ENCODE measurements at regions of chr20 and their contacts with region 1.

Region 1: GRCh38 chr20:23420943-23421931 is at the start of gene NAPB:
- DNase-seq: peak; percentile 68
- ATAC-seq: peak; percentile 99
- H3K4me3 ChIP-seq: peak within 1 kb of the TSS; percentile 91
- H3K27ac ChIP-seq: peak within 1 kb of the TSS; percentile 86
- H3K4me1 ChIP-seq: peaks cover 11% of the 10 kb centered on the region
- H3K27me3 ChIP-seq: no peaks in the 10 kb centered on the region
- CTCF ChIP-seq: peak in 2 of 3 experiments; percentile 10 to 37; a peak in 1 of 6 replicates
- EP300 ChIP-seq: peak in 1 of 2 experiments; percentile 29; a peak in 1 of 4 replicates
- POLR2A ChIP-seq: peak; percentile 94
- RAD21 ChIP-seq: no peak
- polyA plus RNA-seq, gene NAPB: 2.1 to 2.3 TPM

Region 2: GRCh38 chr20:23350196-23350903 is 70.9 kb before region 1 on chr20 and contains the start of gene NXT1:
- CTCF ChIA-PET with region 1: interaction called, 56 read pairs
- POLR2A ChIA-PET with region 1: interaction called, 36 read pairs
- RAD21 ChIA-PET with region 1: interaction called, 15 read pairs
- SMC1A ChIA-PET with region 1: interaction called, 7 read pairs
- in situ Hi-C with region 1: no loop called
- intact Hi-C with region 1: no loop called
- DNase-seq: peak; percentile 92
- ATAC-seq: peak; percentile 92
- H3K4me3 ChIP-seq: peak within 1 kb of the TSS; percentile 89
- H3K27ac ChIP-seq: peak within 1 kb of the TSS; percentile 95
- H3K4me1 ChIP-seq: peaks cover 4% of the 10 kb centered on the region
- H3K27me3 ChIP-seq: no peaks in the 10 kb centered on the region
- CTCF ChIP-seq: peak in 2 of 3 experiments; percentile 16 to 18; a peak in 1 of 6 replicates
- EP300 ChIP-seq: peak in 1 of 2 experiments; percentile 12; a peak in 2 of 4 replicates
- POLR2A ChIP-seq: peak; percentile 83
- RAD21 ChIP-seq: no peak
- polyA plus RNA-seq, gene NXT1: 10.2 to 24.2 TPM

Region 3: DNA sequence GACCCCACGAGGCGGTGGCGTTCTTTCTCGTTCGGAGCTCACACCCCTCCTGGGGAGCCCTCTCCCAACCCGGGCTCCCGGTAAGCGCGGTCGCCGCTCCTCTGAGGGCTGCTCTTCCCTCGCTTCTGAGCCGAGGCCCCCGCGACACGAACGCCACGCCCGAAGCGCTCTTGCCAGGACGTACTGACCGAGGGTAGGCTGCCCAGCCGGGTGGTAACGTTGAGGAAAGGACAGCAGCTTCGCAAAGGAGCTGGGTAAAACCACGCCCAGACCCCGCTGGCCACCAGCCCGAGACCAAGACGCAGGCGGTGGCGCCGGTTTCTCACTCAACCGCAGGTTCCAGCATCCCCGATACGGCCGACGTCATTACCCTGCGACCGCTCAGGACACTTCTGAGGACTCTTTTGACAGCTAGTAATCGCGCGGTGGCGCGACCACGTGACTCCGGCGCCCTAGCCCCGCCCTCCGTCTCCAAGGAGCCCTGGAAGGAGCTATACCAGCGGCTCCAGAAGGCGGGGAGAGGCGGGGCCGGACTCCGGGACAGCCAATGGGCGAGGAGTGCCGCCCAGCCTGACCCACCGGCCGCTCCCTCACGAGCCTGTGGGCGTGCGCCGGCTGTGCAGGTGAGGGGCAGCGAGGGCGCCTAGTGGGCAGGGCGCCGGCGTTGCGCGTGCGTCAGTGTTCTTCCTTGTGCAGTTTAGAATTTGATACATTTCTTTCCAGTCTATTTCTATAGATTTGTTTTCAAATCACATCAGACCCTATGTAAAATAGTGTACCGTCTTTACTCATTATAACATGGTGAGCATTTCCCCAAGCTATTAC is 63.3 kb before region 1 on chr20:
- CTCF ChIA-PET with region 1: interaction called, 9 read pairs
- POLR2A ChIA-PET with region 1: interaction called, 18 read pairs
- RAD21 ChIA-PET with region 1: interaction called, 9 read pairs
- SMC1A ChIA-PET with region 1: interaction called, 7 read pairs
- in situ Hi-C with region 1: no loop called
- intact Hi-C with region 1: loop called (anchors 1 kb)
- DNase-seq: peak; percentile 96
- ATAC-seq: peak; percentile 88
- H3K4me3 ChIP-seq: peak overlapping the region; percentile 78
- H3K27ac ChIP-seq: peak overlapping the region; percentile 85
- H3K4me1 ChIP-seq: peaks cover 7% of the 10 kb centered on the region
- H3K27me3 ChIP-seq: no peaks in the 10 kb centered on the region
- CTCF ChIP-seq: no peak; a peak in 2 of 6 replicates
- EP300 ChIP-seq: peak in 1 of 2 experiments; percentile 48; a peak in 1 of 4 replicates
- POLR2A ChIP-seq: peak; percentile 82
- RAD21 ChIP-seq: no peak

Region 4: GRCh38 chr20:23407781-23408464 is 13.3 kb before region 1 on chr20:
- CTCF ChIA-PET with region 1: interaction called, 7 read pairs
- POLR2A ChIA-PET with region 1: interaction called, 12 read pairs
- RAD21 ChIA-PET with region 1: interaction called, 14 read pairs
- SMC1A ChIA-PET with region 1: interaction called, 10 read pairs
- in situ Hi-C with region 1: no loop called
- intact Hi-C with region 1: no loop called
- DNase-seq: no peak
- ATAC-seq: peak; percentile 98
- H3K4me3 ChIP-seq: no peak overlapping the region
- H3K27ac ChIP-seq: peak overlapping the region; percentile 22
- H3K4me1 ChIP-seq: peaks cover 19% of the 10 kb centered on the region
- H3K27me3 ChIP-seq: no peaks in the 10 kb centered on the region
- CTCF ChIP-seq: no peak
- EP300 ChIP-seq: no peak
- POLR2A ChIP-seq: no peak
- RAD21 ChIP-seq: no peak

Region 5: GRCh38 chr20:23477223-23477622 is 56.0 kb after region 1 on chr20:
- CTCF ChIA-PET with region 1: no interaction called
- POLR2A ChIA-PET with region 1: no interaction called
- RAD21 ChIA-PET with region 1: no interaction called
- SMC1A ChIA-PET with region 1: no interaction called
- in situ Hi-C with region 1: loop called (anchors 10 kb)
- intact Hi-C with region 1: no loop called
- DNase-seq: no peak
- ATAC-seq: no peak
- H3K4me3 ChIP-seq: no peak overlapping the region
- H3K27ac ChIP-seq: no peak overlapping the region
- H3K4me1 ChIP-seq: no peaks in the 10 kb centered on the region
- H3K27me3 ChIP-seq: no peaks in the 10 kb centered on the region
- CTCF ChIP-seq: no peak
- EP300 ChIP-seq: no peak
- POLR2A ChIP-seq: no peak
- RAD21 ChIP-seq: no peak

Measured in GM12878 (cell line).